OCI-LY7 (cell line): ENCODE measurements at regions of chr5 and their contacts with region 1.

Region 1: GRCh38 chr5:158422653-158423515 is 563.9 kb upstream of the CLINT1 start:
- DNase-seq: no peak
- H3K4me3 ChIP-seq: no peak overlapping the region
- H3K27ac ChIP-seq: no peak overlapping the region
- H3K4me1 ChIP-seq: peaks cover 20% of the 10 kb centered on the region
- CTCF ChIP-seq: no peak

Region 2: DNA sequence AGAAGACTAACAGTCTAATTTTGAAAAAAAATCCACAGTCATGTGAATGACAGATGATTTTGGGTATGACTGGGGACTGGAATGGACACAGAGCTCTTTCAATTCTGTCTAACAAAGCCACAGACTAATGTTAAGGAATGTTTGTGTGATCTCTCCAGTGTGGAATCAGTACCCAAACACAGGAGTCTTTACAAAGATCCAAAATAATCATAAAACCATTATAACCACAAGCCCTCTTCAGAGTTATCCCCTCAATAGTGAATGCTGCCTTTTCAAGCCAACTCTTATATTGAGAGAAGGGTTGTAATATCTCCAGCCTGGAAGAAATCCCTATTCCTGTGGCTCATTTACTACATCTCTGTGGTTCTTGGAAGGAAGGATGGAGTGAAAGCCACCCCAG is 11.9 kb before region 1 on chr5:
- CTCF ChIA-PET with region 1: no interaction called
- POLR2A ChIA-PET with region 1: interaction called, 14 read pairs
- intact Hi-C with region 1: no loop called
- DNase-seq: no peak
- H3K4me3 ChIP-seq: no peak overlapping the region
- H3K27ac ChIP-seq: no peak overlapping the region
- H3K4me1 ChIP-seq: peaks cover 7% of the 10 kb centered on the region
- CTCF ChIP-seq: no peak